ENCODE measurements at regions of chr13 and their contacts with region 1.

Region 1: DNA sequence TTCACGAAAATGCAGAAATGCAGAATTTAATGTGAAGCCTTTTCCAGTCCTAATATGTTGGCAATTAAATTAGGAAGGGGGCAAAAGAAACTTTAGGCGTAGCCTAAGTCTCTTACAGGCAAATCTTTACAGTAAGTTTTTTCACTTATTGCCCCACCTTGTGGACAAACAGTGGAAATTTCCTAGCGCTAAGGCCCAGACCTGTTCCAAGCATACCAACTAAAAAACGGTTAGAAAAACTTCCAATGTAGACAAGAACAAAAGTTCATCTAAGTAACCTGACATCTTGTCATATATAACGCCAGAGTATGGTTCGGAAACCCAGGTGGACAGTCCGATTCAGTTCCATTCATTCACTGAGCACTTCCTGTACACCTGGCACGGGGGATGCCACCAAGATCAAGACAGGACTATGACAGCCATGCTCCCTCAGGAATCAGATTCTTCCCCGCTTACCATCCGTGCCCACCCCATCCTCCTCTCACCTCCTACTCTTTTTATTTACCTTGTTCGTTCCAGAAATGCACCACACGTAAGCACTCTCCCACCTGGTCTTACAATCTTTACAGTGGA is 4.9 kb downstream of the ZAR1L start:
- DNase-seq: peak; percentile 28
- H3K4me3 Mint-ChIP-seq: no peak overlapping the region
- H3K27ac Mint-ChIP-seq: no peak overlapping the region
- H3K4me1 Mint-ChIP-seq: peaks cover 28% of the 10 kb centered on the region
- H3K27me3 Mint-ChIP-seq: no peaks in the 10 kb centered on the region

Region 2: DNA sequence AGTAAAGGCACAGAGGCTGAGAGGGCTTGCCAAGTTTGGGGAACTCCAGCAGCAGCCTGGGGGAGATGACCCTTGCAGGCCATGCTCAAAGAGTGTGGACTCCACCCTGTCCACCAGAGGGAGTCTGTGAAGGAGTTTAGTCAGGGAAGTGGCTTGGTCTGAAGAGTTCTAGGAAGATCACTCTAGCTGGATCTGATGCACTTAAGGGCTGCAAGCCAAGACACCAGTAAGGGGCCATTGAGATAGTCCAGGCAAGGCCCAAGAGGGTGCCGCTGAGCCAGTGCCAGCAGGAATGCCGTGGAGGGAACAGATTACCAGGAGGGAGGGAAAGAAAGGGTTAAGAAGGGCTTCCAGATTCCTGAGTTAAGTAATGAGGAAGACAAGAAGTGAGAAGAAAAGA is 63.8 kb before region 1 on chr13:
- CTCF ChIA-PET with region 1: interaction called, 10 read pairs
- POLR2A ChIA-PET with region 1: interaction called, 6 read pairs
- DNase-seq: peak; percentile 50
- H3K4me3 Mint-ChIP-seq: no peak overlapping the region
- H3K27ac Mint-ChIP-seq: no peak overlapping the region
- H3K4me1 Mint-ChIP-seq: peaks cover 11% of the 10 kb centered on the region
- H3K27me3 Mint-ChIP-seq: no peaks in the 10 kb centered on the region